ENCODE measurements at regions of chr7 and their contacts with region 1.

Region 1: GRCh38 chr7:95172420-95172819 is 151.9 kb downstream of the PON1 start:
- DNase-seq: no peak
- ATAC-seq: no peak
- H3K4me3 ChIP-seq: no peak overlapping the region
- H3K4me1 ChIP-seq: no peaks in the 10 kb centered on the region
- CTCF ChIP-seq: no peak

Region 2: GRCh38 chr7:94871132-94871531 is 301.3 kb before region 1 on chr7:
- intact Hi-C with region 1: no loop called
- DNase-seq: no peak
- ATAC-seq: no peak
- H3K4me3 ChIP-seq: no peak overlapping the region
- H3K4me1 ChIP-seq: no peaks in the 10 kb centered on the region
- CTCF ChIP-seq: no peak

Region 3: GRCh38 chr7:95126053-95126709 is 46.2 kb before region 1 on chr7:
- intact Hi-C with region 1: loop called in 1 of 2 experiments (anchors 5 kb)
- DNase-seq: no peak
- ATAC-seq: no peak
- H3K4me3 ChIP-seq: no peak overlapping the region
- H3K4me1 ChIP-seq: no peaks in the 10 kb centered on the region
- CTCF ChIP-seq: no peak

Region 4: DNA sequence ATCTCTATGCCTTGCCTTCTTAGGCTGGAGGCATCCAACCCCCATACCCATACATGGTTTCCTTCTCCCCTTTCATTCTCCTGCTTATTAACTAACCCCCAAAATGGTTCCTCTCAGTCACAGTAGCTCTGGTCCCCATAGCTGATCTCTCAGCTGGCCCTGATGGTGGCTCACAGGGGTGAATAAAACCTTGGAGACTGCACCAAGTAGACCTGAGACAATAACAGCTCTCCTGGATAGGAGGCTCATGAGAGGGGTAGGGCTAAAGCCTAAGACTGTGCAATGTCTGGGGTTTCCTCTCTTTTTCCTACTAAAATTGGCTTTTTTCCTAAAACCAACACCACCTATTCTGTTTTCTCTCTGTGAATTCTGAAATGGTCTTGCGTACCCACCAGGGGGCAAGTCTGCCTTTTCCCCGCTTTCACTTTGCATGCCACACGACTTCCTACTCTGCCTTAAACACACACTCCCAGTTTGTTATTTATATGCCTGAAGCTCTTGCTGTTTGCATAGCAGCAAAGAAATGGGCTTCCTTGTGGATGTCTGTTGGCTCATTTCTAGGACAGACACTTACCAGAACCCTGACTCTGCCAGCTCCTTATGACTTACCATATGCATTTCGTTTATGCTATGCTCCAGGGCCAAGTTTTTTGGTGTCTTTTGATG is 170.4 kb after region 1 on chr7:
- intact Hi-C with region 1: no loop called
- DNase-seq: no peak
- ATAC-seq: no peak
- H3K4me3 ChIP-seq: no peak overlapping the region
- H3K4me1 ChIP-seq: no peaks in the 10 kb centered on the region
- CTCF ChIP-seq: no peak

Region 5: GRCh38 chr7:95840953-95841950 is 668.8 kb after region 1 on chr7:
- intact Hi-C with region 1: no loop called
- DNase-seq: no peak
- ATAC-seq: no peak
- H3K4me3 ChIP-seq: no peak overlapping the region
- H3K4me1 ChIP-seq: no peaks in the 10 kb centered on the region
- CTCF ChIP-seq: no peak